ENCODE measurements at regions of chr3 and their contacts with region 1.

Region 1: DNA sequence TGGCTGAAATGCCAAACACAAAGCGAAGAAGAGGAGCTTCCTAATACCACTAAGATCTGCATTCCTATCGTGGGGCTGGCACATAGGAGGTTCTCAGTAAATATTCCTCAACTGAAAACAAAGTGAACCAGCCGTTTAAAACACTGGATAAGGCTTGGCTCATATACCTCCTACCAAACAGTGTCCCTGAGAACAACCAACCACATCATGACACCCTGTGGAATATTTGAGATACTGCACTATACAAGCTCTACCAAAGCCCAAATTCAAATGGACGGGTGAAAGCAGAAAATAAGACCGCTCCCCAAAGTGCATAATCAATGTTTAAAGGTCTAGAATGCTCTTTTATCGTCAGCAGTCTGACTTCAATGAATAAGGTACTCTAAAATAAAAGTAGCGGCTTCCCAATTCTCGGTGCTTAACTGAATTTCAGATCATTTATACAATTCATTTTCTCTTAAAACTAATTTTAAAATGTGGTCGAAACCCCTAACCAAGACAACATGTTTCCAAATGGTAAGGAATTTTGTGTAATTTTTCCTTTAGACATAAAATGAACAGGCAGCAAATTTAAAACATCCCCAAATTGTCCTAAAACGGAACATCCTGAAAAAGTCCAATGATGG is 425.8 kb downstream of the ERC2 start:
- DNase-seq: peak; percentile 57
- H3K4me3 ChIP-seq: no peak overlapping the region; a peak in 1 of 4 replicates
- H3K27ac ChIP-seq: no peak overlapping the region
- H3K4me1 ChIP-seq: no peaks in the 10 kb centered on the region
- H3K27me3 ChIP-seq: no peaks in the 10 kb centered on the region
- CTCF ChIP-seq: peak; percentile 65
- EP300 ChIP-seq: no peak
- RAD21 ChIP-seq: peak; percentile 89

Region 2: DNA sequence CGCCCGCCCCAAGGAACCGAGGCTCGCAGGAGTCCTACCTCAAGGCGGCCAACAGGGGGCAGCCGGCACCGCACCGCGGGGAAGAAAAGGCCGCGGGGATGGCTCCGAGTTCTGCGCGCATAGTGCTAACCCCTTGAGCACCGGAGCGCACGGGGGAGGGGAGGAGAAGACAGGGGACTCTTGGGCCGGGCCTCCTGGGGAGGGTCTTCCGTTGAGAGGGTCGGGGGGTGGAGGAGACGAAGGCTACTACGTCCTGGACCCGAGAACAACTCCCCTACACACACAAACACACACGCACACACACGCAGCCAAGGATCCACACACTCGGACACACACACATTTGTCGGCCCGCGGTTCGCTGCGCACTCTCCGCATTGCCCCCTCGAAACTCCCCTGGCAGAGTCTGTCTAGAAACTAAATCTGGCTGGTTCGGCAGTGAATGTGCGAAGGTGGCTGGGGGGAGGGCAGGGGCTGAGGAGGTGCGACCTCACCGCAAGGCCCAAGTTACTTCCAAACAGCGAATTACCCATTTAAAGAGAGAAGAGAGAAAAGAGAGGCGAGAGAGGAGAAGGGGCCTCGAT is 557.1 kb before region 1 on chr3:
- CTCF ChIA-PET with region 1: interaction called, 14 read pairs
- POLR2A ChIA-PET with region 1: no interaction called
- DNase-seq: peak; percentile 92
- H3K4me3 ChIP-seq: peak overlapping the region; percentile 78 to 83
- H3K27ac ChIP-seq: peak overlapping the region; percentile 24 to 88; a peak in 3 of 4 replicates
- H3K4me1 ChIP-seq: peaks cover 0 to 29% of the 10 kb centered on the region in 2 experiments; a peak in 2 of 4 replicates
- H3K27me3 ChIP-seq: no peaks in the 10 kb centered on the region
- CTCF ChIP-seq: peak; percentile 47
- EP300 ChIP-seq: no peak
- RAD21 ChIP-seq: peak; percentile 71

Region 3: DNA sequence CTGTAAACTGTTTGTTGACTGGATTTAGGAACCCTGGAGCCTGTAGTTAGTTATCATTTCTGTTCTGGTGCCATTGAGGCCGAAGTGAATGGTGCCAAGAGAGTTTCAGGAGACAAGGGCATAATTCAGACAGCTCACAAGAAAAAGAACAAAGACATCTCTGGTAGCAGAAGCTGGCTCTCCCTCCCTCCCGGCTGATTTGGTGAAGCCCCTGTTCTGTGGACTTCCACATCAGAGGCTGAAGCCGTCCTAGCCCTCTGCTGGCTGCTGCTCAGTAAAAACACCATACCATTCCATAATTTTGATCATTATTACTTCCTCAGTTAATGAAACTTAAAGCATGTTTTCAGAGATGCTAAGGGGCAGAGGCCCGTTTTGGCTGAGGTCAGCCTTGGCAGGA is 174.1 kb before region 1 on chr3:
- CTCF ChIA-PET with region 1: no interaction called
- POLR2A ChIA-PET with region 1: no interaction called
- DNase-seq: no peak
- H3K4me3 ChIP-seq: no peak overlapping the region
- H3K27ac ChIP-seq: no peak overlapping the region
- H3K4me1 ChIP-seq: no peaks in the 10 kb centered on the region; a peak in 1 of 4 replicates
- H3K27me3 ChIP-seq: no peaks in the 10 kb centered on the region
- CTCF ChIP-seq: no peak; the same call in 1 of the 2 replicates
- EP300 ChIP-seq: no peak
- RAD21 ChIP-seq: no peak

Region 4: DNA sequence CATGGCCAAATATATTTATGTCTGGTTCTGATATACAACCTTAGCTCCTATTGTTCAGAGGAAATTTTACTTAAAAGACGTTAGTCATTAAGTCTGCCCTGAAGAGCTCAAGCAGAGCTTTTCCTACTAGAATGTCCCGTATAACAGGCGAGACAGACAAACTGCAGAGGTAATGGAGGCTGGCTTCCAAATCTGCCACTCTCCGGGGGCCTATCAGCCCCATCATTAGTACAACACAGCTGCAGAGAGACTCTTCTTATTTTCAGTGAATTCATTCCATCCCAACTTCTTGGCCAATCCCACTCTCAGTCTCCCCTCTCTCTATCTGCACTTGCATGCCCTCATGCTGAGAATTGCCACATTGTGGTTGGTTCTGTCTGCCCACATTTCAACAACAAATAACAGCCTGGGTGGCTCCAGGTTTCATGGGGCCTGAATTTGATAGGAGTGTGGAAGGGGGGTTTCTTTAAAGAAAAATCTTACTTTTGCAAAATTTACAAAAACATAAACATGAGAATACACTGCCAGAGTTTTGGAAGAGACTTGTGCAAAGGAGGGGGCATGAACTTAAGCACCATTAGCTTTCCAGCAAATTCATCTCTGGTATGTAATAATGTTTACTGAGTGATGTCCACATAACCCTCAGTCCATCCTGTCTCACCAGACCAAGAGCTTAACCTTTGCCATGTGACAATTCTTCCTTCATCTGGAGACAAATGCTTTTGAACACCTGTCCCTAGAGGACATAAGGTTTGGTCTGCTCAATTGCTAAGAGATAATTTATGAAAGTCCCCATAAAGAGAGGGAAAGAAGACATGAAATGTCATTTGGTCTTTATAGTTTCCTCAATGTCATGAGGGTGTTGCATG is 13.3 kb after region 1 on chr3:
- CTCF ChIA-PET with region 1: interaction called, 16 read pairs
- POLR2A ChIA-PET with region 1: no interaction called
- DNase-seq: no peak
- H3K4me3 ChIP-seq: no peak overlapping the region; a peak in 1 of 4 replicates
- H3K27ac ChIP-seq: no peak overlapping the region
- H3K4me1 ChIP-seq: no peaks in the 10 kb centered on the region
- H3K27me3 ChIP-seq: no peaks in the 10 kb centered on the region
- CTCF ChIP-seq: no peak
- EP300 ChIP-seq: no peak
- RAD21 ChIP-seq: no peak

Measured in SK-N-SH (cell line).